ENCODE measurements at regions of chr19 and their contacts with region 1.

Region 1: GRCh38 chr19:9140159-9140874 is at the start of gene ZNF317:
- DNase-seq: peak; percentile 87 to 97 (median 91)
- H3K4me3 ChIP-seq: peak within 1 kb of the TSS; percentile 75 to 100 (median 98)
- H3K4me3 Mint-ChIP-seq: peak within 1 kb of the TSS; percentile 99
- H3K27ac ChIP-seq: peak within 1 kb of the TSS; percentile 77 to 97
- H3K27ac Mint-ChIP-seq: peak within 1 kb of the TSS; percentile 91 to 99 (median 98)
- H3K4me1 ChIP-seq: peaks cover 28 to 32% of the 10 kb centered on the region in 2 donors
- H3K4me1 Mint-ChIP-seq: peaks cover 40% of the 10 kb centered on the region
- H3K27me3 ChIP-seq: no peaks in the 10 kb centered on the region
- H3K27me3 Mint-ChIP-seq: peaks cover 0 to 5% (median 0%) of the 10 kb centered on the region in 3 donors
- CTCF ChIP-seq: no peak
- polyA plus RNA-seq, gene ZNF317: 17.3 to 25.5 (median 20.7) TPM

Region 2: DNA sequence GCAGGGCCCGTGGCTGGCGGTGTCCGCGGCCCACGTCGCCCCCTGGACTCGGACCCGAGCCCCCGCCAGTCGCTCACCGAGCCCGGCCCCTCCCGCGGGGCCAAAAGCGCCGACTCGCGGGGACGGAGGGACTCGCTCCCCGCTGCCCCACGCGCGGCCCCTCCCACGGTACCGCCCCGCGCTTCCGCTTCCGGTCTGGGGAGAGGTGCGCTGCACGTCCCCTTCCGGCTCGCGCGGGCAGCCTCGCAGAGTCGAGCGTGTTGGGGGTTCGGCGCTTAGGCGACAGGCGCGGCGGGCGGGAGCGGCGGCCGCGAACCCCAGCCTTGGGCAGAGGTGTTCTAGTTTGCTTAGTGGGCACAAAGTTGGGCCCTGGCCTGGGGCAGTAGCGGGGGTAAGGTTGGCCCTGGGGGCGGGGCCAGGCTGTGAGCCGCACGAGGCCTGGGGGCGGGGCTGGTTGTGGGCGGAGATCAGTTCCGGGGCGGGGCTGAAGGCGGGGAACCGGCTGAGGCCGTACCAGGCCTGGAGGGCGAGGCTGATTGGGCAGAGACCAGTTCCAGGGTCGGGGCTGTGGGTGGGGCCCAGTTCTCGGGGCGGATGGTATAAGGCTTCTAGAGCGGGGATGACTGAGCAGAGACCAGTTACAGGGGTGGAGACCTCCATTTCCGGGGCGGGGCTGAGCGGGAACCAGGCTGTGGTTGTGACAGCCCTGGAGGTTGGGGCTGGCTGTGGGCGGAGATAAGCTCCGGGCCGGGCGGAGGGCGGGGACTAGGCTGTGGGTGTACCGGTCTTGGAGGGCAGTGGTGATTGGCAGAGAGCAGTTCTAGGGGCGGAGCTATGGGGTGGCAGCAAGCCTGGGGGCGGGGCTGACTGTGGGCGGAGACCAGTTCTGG is 307.9 kb before region 1 on chr19 and contains the starts of genes MBD3L1 and ZNF558:
- intact Hi-C with region 1: loop called in 1 of 2 experiments (anchors 5 kb)
- DNase-seq: peak; percentile 98 to 99 (median 98)
- H3K4me3 ChIP-seq: peak within 1 kb of the TSS; percentile 65 to 92 (median 82)
- H3K4me3 Mint-ChIP-seq: peak within 1 kb of the TSS; percentile 85 to 91
- H3K27ac ChIP-seq: peak within 1 kb of the TSS; percentile 80 to 91
- H3K27ac Mint-ChIP-seq: peak within 1 kb of the TSS; percentile 86 to 96 (median 94)
- H3K4me1 ChIP-seq: peaks cover 11 to 18% of the 10 kb centered on the region in 2 donors
- H3K4me1 Mint-ChIP-seq: peaks cover 16% of the 10 kb centered on the region
- H3K27me3 ChIP-seq: no peaks in the 10 kb centered on the region
- H3K27me3 Mint-ChIP-seq: peaks cover 2 to 3% (median 3%) of the 10 kb centered on the region in 3 donors
- CTCF ChIP-seq: peak; percentile 46
- polyA plus RNA-seq, gene MBD3L1: not detected
- polyA plus RNA-seq, gene ZNF558: 3.7 to 22.1 (median 5.6) TPM

Region 3: DNA sequence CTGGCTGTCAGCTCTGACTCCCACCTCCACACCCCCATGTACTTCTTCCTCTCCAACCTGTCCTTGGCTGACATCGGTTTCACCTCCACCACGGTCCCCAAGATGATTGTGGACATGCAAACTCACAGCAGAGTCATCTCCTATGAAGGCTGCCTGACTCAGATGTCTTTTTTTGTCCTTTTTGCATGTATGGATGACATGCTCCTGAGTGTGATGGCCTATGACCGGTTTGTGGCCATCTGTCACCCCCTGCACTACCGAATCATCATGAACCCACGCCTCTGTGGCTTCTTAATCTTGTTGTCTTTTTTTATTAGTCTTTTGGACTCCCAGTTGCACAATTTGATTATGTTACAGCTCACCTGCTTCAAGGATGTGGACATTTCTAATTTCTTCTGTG is 110.9 kb after region 1 on chr19:
- intact Hi-C with region 1: no loop called
- DNase-seq: no peak
- H3K4me3 ChIP-seq: no peak overlapping the region
- H3K4me3 Mint-ChIP-seq: no peak overlapping the region
- H3K27ac ChIP-seq: no peak overlapping the region
- H3K27ac Mint-ChIP-seq: no peak overlapping the region
- H3K4me1 ChIP-seq: no peaks in the 10 kb centered on the region
- H3K4me1 Mint-ChIP-seq: no peaks in the 10 kb centered on the region
- H3K27me3 ChIP-seq: no peaks in the 10 kb centered on the region
- H3K27me3 Mint-ChIP-seq: peaks cover 0 to 3% (median 3%) of the 10 kb centered on the region in 3 donors
- CTCF ChIP-seq: no peak

Region 4: GRCh38 chr19:9309139-9309973 is 169.0 kb after region 1 on chr19 and contains the start of gene ZNF699:
- intact Hi-C with region 1: loop called (anchors 5 to 10 kb)
- DNase-seq: peak; percentile 96 to 99 (median 97)
- H3K4me3 ChIP-seq: peak within 1 kb of the TSS; percentile 55 to 93 (median 83)
- H3K4me3 Mint-ChIP-seq: peak within 1 kb of the TSS; percentile 97 to 98
- H3K27ac ChIP-seq: peak within 1 kb of the TSS; percentile 58 to 96
- H3K27ac Mint-ChIP-seq: peak within 1 kb of the TSS; percentile 96 to 99 (median 98)
- H3K4me1 ChIP-seq: peaks cover 13 to 18% of the 10 kb centered on the region in 2 donors
- H3K4me1 Mint-ChIP-seq: peaks cover 19% of the 10 kb centered on the region
- H3K27me3 ChIP-seq: no peaks in the 10 kb centered on the region
- H3K27me3 Mint-ChIP-seq: peaks cover 1 to 4% (median 2%) of the 10 kb centered on the region in 3 donors
- CTCF ChIP-seq: no peak
- polyA plus RNA-seq, gene ZNF699: 3.4 to 18.5 (median 5.6) TPM

Region 5: DNA sequence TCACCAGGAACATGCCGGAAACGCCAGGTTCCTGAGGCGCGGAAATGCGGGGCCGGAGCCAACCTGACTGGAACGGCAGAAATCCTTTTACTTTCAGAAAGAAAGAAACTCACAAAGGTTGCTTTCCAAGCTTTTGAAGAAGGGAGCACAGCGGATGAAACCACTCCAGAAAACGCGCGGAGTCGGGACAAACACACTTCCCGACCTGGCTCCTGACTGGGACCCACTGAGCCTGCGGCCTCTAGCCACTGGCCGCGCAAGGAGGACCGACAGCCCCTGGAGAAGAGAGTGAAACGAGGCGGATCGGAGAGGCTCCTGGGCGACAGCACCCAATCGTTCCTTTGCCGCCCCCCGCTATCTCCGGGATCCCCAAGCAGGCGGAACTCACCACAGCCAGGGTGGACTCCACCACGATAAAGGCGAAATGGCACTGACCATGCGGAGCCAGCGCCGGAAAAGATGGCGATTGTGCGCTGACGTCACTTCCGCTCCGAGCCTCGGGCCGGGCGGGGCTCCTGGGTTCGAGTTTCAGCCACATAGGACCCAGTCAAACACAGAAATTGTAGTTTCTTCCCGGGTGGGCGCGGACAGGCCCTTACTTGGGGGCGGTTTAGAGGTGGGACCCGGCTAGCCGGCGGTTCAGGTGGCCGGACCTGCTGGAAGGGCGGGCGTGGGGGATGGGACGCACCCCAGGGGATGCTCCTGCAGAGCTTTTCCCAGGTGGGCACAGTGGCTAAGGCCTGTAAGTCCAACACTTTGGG is 443.9 kb after region 1 on chr19 and contains the start of gene ZNF121:
- intact Hi-C with region 1: loop called (anchors 10 kb)
- DNase-seq: peak; percentile 78 to 80 (median 79)
- H3K4me3 ChIP-seq: peak within 1 kb of the TSS; percentile 68 to 95 (median 81)
- H3K4me3 Mint-ChIP-seq: peak within 1 kb of the TSS; percentile 93 to 96
- H3K27ac ChIP-seq: peak within 1 kb of the TSS; percentile 84 to 91
- H3K27ac Mint-ChIP-seq: peak within 1 kb of the TSS; percentile 92 to 98 (median 95)
- H3K4me1 ChIP-seq: peaks cover 10 to 17% of the 10 kb centered on the region in 2 donors
- H3K4me1 Mint-ChIP-seq: peaks cover 16% of the 10 kb centered on the region
- H3K27me3 ChIP-seq: no peaks in the 10 kb centered on the region
- H3K27me3 Mint-ChIP-seq: peaks cover 4 to 11% (median 7%) of the 10 kb centered on the region in 3 donors
- CTCF ChIP-seq: no peak
- polyA plus RNA-seq, gene ZNF121: 1.5 to 7.2 (median 3.8) TPM

Region 6: DNA sequence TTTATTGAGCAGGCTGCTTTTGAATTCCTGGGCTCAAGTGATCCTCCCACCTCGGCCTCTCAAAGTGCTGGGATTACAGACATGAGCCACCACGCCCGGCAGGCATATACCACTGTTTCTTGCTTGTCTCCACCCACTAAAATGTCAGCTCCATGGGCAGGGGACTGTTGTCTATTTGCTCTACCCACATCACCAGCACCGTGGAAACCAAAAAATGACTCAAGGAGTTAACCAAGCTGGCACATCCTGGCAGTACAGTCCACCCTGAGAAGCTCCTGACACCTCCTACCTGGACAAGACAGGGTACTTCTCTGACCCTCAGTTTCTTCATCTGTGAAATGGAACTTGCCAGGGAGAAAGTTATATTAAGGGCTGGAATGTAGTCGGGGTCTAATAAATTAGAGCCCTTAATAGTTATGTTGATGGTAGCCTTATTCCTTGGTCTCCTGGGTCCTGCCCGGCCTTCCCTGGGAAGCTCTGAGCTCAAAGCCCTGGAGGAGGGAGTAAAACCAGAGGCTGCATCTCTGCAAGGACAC is 886.9 kb after region 1 on chr19:
- intact Hi-C with region 1: loop called in 1 of 2 experiments (anchors 5 kb)
- DNase-seq: no peak
- H3K4me3 ChIP-seq: peak overlapping the region in 1 of 3 experiments; percentile 39
- H3K4me3 Mint-ChIP-seq: peak overlapping the region in 1 of 2 donors; percentile 27
- H3K27ac ChIP-seq: no peak overlapping the region
- H3K27ac Mint-ChIP-seq: no peak overlapping the region
- H3K4me1 ChIP-seq: peaks cover 3 to 5% of the 10 kb centered on the region in 2 donors
- H3K4me1 Mint-ChIP-seq: peaks cover 3% of the 10 kb centered on the region
- H3K27me3 ChIP-seq: peaks cover 0 to 9% of the 10 kb centered on the region in 2 donors
- H3K27me3 Mint-ChIP-seq: peaks cover 11 to 18% (median 14%) of the 10 kb centered on the region in 3 donors
- CTCF ChIP-seq: no peak

Measured in CD14-positive monocyte (primary cell).